IMR-90 (cell line): ENCODE measurements at regions of chr20 and their contacts with region 1.

Region 1: DNA sequence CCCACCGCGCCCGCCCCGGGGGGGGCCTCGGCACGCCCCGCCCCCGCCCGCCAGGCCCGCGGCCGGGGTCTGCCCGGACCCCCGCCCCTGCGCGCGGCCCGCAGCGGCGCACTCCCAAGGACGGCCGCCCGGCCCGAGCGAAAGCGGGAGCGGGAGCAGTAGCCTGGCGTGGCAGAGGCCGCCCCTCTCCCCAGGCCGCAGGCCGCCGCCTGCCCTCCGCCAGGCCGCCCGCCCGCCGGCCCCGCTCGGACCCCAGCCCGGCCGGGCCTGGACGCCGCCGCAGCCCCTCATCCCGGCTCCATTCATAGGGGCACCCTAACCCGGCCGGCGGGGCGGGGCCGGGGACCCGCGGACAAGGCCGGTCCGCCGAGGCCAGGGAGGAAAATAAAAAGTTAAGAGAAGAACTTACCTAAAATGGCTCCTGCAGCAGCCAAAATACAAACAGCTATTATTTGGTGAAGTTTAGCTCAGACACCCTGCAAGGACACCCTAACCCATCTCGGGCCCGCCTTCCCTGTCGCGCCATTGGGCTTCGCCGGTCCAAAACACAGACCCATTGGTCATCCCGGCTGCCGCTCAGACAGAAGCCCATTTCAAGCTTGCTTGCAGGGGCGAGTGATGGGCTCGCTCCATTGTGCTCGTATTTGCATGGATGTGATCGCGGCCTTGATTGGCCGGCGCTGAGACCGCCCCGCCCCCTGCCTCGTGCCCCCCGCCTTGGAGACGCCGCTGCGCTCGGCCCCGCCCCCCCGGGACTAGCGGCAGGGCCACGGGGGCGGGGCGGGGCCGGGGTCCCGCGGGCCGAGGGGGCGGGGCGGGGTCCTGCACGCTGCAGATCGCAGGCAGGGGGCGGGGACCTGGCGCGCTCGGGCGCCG is at the start of gene CHD6:
- DNase-seq: peak; percentile 99
- ATAC-seq: peak; percentile 98
- H3K4me3 ChIP-seq: peak within 1 kb of the TSS; percentile 85
- H3K27ac ChIP-seq: peak within 1 kb of the TSS; percentile 59
- H3K4me1 ChIP-seq: peaks cover 4% of the 10 kb centered on the region
- H3K27me3 ChIP-seq: peaks cover 7% of the 10 kb centered on the region; the same call in 1 of the 2 replicates
- CTCF ChIP-seq: no peak
- POLR2A ChIP-seq: peak; percentile 39; the same call in 1 of the 2 replicates
- RAD21 ChIP-seq: no peak
- total RNA-seq, gene CHD6: 26.7 and 31.7 TPM in 2 replicates

Region 2: GRCh38 chr20:41482647-41483552 is 135.3 kb before region 1 on chr20:
- CTCF ChIA-PET with region 1: no interaction called
- POLR2A ChIA-PET with region 1: no interaction called
- dilution Hi-C with region 1: no loop called
- in situ Hi-C with region 1: no loop called
- intact Hi-C with region 1: loop called (anchors 5 kb)
- DNase-seq: peak; percentile 93
- ATAC-seq: peak; percentile 92
- H3K4me3 ChIP-seq: no peak overlapping the region
- H3K27ac ChIP-seq: peak overlapping the region; percentile 99
- H3K4me1 ChIP-seq: peaks cover 12% of the 10 kb centered on the region
- H3K27me3 ChIP-seq: no peaks in the 10 kb centered on the region
- CTCF ChIP-seq: no peak
- POLR2A ChIP-seq: no peak
- RAD21 ChIP-seq: no peak

Region 3: GRCh38 chr20:41499961-41500725 is 118.0 kb before region 1 on chr20:
- CTCF ChIA-PET with region 1: no interaction called
- POLR2A ChIA-PET with region 1: no interaction called
- dilution Hi-C with region 1: no loop called
- in situ Hi-C with region 1: no loop called
- intact Hi-C with region 1: loop called (anchors 5 kb)
- DNase-seq: no peak
- ATAC-seq: no peak; the same call in 1 of the 2 replicates
- H3K4me3 ChIP-seq: no peak overlapping the region
- H3K27ac ChIP-seq: no peak overlapping the region
- H3K4me1 ChIP-seq: peaks cover 7% of the 10 kb centered on the region
- H3K27me3 ChIP-seq: no peaks in the 10 kb centered on the region
- CTCF ChIP-seq: no peak
- POLR2A ChIP-seq: no peak
- RAD21 ChIP-seq: no peak